Activated T-helper 1 cell treated with anti-CD3 and anti-CD28 coated beads, Interleukin-12 subunit alpha, Interleukin-12 subunit beta, Interleukin-2, Interleukin-4 antibody, amounts not matched to agents 30 ng/mL and 10 ng/mL and 1 ng/mL, durations not matched to agents 14 hours and 24 hours and 36 hours (primary cell): ENCODE measurements at regions of chr16 and their contacts with region 1.

Region 1: GRCh38 chr16:8936421-8936820 is 27.3 kb downstream of the USP7 start:
- DNase-seq: peak; percentile 60
- H3K4me3 Mint-ChIP-seq: no peak overlapping the region
- H3K27ac Mint-ChIP-seq: peak overlapping the region; percentile 41
- H3K4me1 Mint-ChIP-seq: peaks cover 36% of the 10 kb centered on the region
- H3K27me3 Mint-ChIP-seq: no peaks in the 10 kb centered on the region

Region 2: DNA sequence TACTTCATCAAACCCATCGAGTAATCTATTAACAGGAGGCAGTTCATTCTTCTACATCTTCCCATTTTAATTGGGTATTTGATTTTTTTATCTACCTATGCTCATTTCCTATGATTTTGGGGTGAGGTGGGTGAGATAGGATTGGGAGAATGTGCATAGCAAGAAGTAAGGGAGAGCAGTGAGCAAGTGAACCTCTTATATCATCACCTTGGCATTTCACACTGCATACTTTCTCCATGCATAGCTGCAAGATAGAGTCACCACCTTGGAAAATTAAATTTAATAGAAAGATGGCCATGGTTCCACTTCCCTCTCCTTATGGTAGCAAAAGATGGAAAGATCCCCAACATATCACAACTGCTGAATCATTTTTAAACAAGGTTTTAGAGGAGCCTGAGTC is 658.2 kb before region 1 on chr16:
- intact Hi-C with region 1: no loop called
- DNase-seq: no peak
- H3K4me3 Mint-ChIP-seq: no peak overlapping the region
- H3K27ac Mint-ChIP-seq: no peak overlapping the region
- H3K4me1 Mint-ChIP-seq: no peaks in the 10 kb centered on the region
- H3K27me3 Mint-ChIP-seq: no peaks in the 10 kb centered on the region

Region 3: GRCh38 chr16:8880839-8881510 is 55.4 kb before region 1 on chr16:
- intact Hi-C with region 1: loop called (anchors 1 kb)
- DNase-seq: no peak
- H3K4me3 Mint-ChIP-seq: no peak overlapping the region
- H3K27ac Mint-ChIP-seq: no peak overlapping the region
- H3K4me1 Mint-ChIP-seq: no peaks in the 10 kb centered on the region
- H3K27me3 Mint-ChIP-seq: peaks cover 2% of the 10 kb centered on the region

Region 4: DNA sequence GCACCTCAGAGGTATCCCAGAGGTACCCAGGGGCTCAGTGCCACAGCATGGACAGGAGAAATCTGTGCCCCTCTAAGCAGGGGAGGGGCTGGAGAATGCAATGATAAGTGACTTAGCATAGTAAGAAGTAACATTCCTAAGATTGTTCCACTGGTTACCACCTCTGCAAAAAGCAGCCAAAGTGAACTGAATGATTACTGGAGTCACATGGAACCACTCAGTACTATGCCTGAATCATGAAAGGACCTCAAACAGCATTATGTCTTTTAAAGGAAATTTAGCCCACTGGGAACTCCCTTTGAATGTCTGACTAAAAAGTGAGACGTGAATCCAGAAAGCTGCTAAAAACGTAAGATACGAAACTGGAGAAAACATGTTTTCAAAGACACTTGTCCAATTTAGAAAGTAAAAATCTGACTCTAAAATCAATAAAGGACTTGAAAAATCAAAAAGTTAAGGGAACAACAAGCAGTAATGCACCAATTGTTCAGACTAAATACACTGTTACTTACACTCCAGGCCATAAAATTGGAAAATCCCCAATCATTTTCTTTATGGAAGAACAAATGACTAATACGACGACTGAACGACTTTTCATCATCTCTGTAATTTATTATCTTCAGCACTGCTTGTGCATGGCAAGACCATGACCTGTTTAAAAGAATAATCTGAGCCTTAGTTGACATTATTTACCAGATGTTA is 15.6 kb before region 1 on chr16:
- intact Hi-C with region 1: loop called (anchors 1 kb)
- DNase-seq: no peak
- H3K4me3 Mint-ChIP-seq: peak overlapping the region; percentile 7
- H3K27ac Mint-ChIP-seq: peak overlapping the region; percentile 73
- H3K4me1 Mint-ChIP-seq: peaks cover 60% of the 10 kb centered on the region
- H3K27me3 Mint-ChIP-seq: no peaks in the 10 kb centered on the region

Region 5: DNA sequence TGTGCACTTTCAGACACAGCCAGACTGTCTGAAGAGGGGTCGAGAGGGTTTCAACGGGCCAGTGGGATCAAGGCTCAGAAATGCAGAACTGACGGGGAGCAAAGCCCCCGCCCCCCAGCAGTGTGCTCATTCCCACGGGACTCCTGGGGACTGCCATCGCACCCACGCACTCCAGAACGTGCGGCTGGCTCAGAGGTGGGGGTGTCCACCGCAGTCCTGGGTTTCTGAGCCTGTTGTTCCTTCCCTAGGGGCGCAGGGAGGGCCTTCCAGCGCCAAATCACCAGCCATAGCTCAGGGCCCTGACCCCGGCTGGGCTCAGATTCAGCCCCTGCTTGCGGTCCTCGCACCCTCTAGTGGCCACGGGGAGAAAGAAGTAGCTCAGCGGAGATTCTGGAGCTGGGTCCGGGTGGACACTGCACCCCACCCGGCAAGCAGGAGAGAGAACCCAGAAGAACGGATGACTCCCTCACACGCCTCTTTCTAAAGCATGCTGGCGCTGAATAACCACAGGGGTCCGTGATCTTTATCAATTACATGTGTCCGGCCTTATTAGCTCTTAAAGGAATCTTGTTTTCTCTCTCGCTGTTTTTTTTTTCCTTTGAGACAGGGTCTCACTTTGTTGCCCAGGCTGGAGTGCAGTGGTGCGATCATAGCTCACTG is 72.3 kb after region 1 on chr16:
- intact Hi-C with region 1: loop called (anchors 1 kb)
- DNase-seq: peak; percentile 42
- H3K4me3 Mint-ChIP-seq: no peak overlapping the region
- H3K27ac Mint-ChIP-seq: no peak overlapping the region
- H3K4me1 Mint-ChIP-seq: no peaks in the 10 kb centered on the region
- H3K27me3 Mint-ChIP-seq: peaks cover 8% of the 10 kb centered on the region

Region 6: DNA sequence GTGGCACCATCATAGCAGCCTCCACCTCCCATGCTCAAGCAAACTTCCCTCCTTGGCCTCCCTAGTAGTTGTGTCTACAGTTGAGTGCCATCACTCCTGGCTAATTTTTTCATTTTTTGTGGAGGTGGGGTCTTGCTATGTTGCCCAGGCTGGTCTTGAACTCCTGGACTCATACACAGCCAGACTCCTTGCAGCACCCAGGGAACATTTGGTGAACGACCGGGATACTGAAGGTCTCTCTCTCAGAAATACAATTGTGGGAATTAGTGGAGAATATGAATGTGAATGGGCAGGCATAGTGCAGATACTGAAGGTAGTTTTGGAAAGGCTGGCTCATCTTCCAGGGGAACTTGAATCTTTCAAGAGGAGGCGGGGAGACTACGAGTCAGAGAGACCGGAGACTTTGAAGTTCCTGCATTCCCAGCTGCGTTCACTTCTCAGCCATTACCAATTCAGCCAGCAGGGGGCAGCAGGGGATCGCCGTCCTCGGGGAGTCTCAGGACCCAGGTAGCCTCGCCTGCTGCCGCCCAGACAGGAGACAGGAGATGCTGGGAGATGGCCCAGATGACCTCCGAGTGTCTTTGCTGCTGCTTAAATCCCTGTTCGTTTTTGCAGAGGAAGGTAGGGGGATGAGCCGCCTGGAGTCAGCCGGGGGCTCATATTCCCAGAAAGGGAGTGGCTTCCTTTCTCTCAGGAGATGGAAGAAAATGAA is 223.6 kb after region 1 on chr16:
- intact Hi-C with region 1: no loop called
- DNase-seq: peak; percentile 47
- H3K4me3 Mint-ChIP-seq: no peak overlapping the region
- H3K27ac Mint-ChIP-seq: no peak overlapping the region
- H3K4me1 Mint-ChIP-seq: peaks cover 8% of the 10 kb centered on the region
- H3K27me3 Mint-ChIP-seq: peaks cover 8% of the 10 kb centered on the region